Heart right ventricle (tissue), 16 donors: ENCODE measurements at regions of chr7 and their contacts with region 1.

Region 1: GRCh38 chr7:38107486-38107893 is 70.6 kb upstream of the STARD3NL start:
- DNase-seq: peak in 1 of 2 donors; percentile 45
- ATAC-seq: peak in 6 of 8 donors; percentile 69 to 78 (median 74)
- H3K4me3 ChIP-seq: no peak overlapping the region
- H3K27ac ChIP-seq: no peak overlapping the region
- H3K4me1 ChIP-seq: peaks cover 0 to 4% (median 0%) of the 10 kb centered on the region in 9 donors
- H3K27me3 ChIP-seq: peaks cover 0 to 6% (median 0%) of the 10 kb centered on the region in 7 donors
- CTCF ChIP-seq: peak; percentile 68 to 86 (median 81)

Region 2: DNA sequence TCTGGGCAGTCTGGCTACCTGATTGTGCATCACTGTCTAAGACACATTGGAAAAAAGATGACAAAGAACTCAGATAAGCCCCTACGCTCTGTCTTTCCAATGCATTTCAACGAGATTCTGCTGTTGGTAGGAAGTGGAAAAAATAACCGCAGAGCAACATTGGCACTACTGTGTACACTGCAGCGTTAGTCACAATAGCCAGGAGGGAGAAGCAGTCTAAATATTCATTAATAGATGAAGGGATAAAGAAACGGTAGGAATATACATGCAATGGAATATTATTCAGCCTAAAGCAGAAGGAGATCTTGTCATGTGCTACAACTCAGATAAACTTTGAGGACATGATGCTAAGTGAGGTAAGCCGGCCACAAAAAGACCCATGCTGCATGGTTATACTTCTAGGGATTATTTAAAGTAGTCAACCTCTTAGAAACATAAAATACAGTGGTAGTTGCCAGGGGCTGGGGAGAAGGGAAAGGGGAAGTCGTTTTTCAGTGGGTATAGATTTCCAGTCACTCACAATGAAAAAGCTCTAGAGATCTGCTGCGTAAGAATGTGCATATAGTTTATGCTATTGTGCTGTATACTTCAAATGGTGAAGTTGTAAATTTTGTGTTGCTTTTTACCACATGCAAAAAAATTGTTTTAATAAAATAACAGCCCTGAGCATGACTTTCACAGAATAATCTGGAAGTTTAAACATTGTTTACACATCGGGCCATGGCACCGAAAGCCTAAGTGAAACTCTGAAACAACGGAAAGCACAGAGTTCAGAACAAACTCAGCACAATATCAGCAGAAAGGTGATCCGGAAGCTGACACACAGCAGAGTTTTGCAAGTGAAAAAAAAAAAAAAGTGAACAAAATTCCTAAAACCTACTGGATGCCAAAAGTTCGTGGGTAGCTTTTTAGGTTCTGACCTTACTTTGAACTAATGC is 698.9 kb before region 1 on chr7:
- intact Hi-C with region 1: no loop called
- DNase-seq: no peak
- ATAC-seq: peak in 2 of 8 donors; percentile 17 to 26
- H3K4me3 ChIP-seq: peak overlapping the region in 1 of 10 donors; percentile 22
- H3K27ac ChIP-seq: peak overlapping the region in 4 of 10 donors; percentile 5 to 55 (median 44)
- H3K4me1 ChIP-seq: peaks cover 7 to 76% (median 51%) of the 10 kb centered on the region in 9 donors
- H3K27me3 ChIP-seq: no peaks in the 10 kb centered on the region
- CTCF ChIP-seq: no peak

Region 3: GRCh38 chr7:37901236-37901827 is 206.2 kb before region 1 on chr7:
- intact Hi-C with region 1: loop called in 8 of 10 experiments (anchors 5 to 10 kb)
- DNase-seq: no peak
- ATAC-seq: peak in 5 of 8 donors; percentile 47 to 62 (median 57)
- H3K4me3 ChIP-seq: no peak overlapping the region
- H3K27ac ChIP-seq: peak overlapping the region in 1 of 10 donors; percentile 37
- H3K4me1 ChIP-seq: peaks cover 0 to 17% (median 7%) of the 10 kb centered on the region in 9 donors
- H3K27me3 ChIP-seq: no peaks in the 10 kb centered on the region
- CTCF ChIP-seq: peak; percentile 15 to 69 (median 56)

Region 4: GRCh38 chr7:37942934-37943610 is 164.4 kb before region 1 on chr7:
- intact Hi-C with region 1: no loop called
- DNase-seq: peak; percentile 80 to 83
- ATAC-seq: peak; percentile 93 to 98 (median 95)
- H3K4me3 ChIP-seq: no peak overlapping the region
- H3K27ac ChIP-seq: peak overlapping the region; percentile 25 to 87 (median 66)
- H3K4me1 ChIP-seq: peaks cover 2 to 50% (median 30%) of the 10 kb centered on the region in 9 donors
- H3K27me3 ChIP-seq: no peaks in the 10 kb centered on the region
- CTCF ChIP-seq: no peak

Region 5: GRCh38 chr7:38122501-38122900 is 15.0 kb after region 1 on chr7:
- intact Hi-C with region 1: no loop called
- DNase-seq: no peak
- ATAC-seq: no peak
- H3K4me3 ChIP-seq: no peak overlapping the region
- H3K27ac ChIP-seq: no peak overlapping the region
- H3K4me1 ChIP-seq: no peaks in the 10 kb centered on the region
- H3K27me3 ChIP-seq: peaks cover 0 to 3% (median 0%) of the 10 kb centered on the region in 7 donors
- CTCF ChIP-seq: no peak

Region 6: DNA sequence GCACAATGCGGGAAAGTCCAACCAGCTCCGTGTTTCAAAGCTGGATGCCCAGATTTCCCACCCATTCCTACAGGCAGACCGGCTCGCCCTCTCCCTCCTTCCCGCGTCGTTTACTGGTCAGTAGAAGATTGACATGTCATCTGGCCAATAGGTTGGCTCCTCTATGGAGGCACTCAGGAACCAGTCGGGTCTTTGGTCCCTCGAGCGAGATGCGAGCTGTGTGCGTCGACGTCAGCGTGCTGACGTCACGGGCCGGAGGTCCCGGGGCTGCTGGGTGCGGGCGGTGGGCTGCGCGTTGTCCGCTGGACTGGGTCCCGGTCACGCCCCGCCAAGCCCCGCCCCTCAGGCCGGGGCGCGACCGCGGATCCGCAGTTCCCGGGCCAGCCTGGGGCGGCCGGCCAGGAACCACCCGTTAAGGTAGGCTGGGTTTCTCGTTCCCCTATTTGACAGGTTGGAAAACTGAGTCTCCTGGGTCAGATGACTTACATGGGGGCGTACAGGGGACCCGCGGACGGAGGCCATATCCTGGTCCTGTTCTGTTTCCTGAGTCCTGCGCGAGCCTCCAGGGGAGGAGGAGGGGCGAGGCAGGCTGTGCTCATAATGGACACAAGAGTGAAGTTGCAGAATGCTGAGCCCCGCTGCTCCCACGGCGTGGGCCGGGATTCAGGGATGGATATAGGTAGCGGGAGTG is 70.7 kb after region 1 on chr7 and contains the start of gene STARD3NL:
- intact Hi-C with region 1: loop called in 1 of 10 experiments (anchors 2 kb)
- DNase-seq: peak; percentile 94 to 100
- ATAC-seq: peak; percentile 98 to 99 (median 99)
- H3K4me3 ChIP-seq: peak within 1 kb of the TSS; percentile 64 to 94 (median 81)
- H3K27ac ChIP-seq: peak within 1 kb of the TSS; percentile 66 to 96 (median 90)
- H3K4me1 ChIP-seq: peaks cover 2 to 52% (median 40%) of the 10 kb centered on the region in 9 donors
- H3K27me3 ChIP-seq: no peaks in the 10 kb centered on the region
- CTCF ChIP-seq: peak in 1 of 9 donors; percentile 18
- total RNA-seq, gene STARD3NL: 17.6 to 29.3 (median 24.2) TPM

Region 7: GRCh38 chr7:38318803-38319416 is 211.4 kb after region 1 on chr7:
- intact Hi-C with region 1: loop called in 8 of 10 experiments (anchors 2 to 10 kb)
- DNase-seq: peak in 1 of 2 donors; percentile 20
- ATAC-seq: peak in 7 of 8 donors; percentile 79 to 92 (median 86)
- H3K4me3 ChIP-seq: no peak overlapping the region
- H3K27ac ChIP-seq: peak overlapping the region in 3 of 10 donors; percentile 33 to 63 (median 61)
- H3K4me1 ChIP-seq: peaks cover 0 to 23% (median 0%) of the 10 kb centered on the region in 9 donors
- H3K27me3 ChIP-seq: no peaks in the 10 kb centered on the region
- CTCF ChIP-seq: peak; percentile 12 to 71 (median 61)

Region 8: DNA sequence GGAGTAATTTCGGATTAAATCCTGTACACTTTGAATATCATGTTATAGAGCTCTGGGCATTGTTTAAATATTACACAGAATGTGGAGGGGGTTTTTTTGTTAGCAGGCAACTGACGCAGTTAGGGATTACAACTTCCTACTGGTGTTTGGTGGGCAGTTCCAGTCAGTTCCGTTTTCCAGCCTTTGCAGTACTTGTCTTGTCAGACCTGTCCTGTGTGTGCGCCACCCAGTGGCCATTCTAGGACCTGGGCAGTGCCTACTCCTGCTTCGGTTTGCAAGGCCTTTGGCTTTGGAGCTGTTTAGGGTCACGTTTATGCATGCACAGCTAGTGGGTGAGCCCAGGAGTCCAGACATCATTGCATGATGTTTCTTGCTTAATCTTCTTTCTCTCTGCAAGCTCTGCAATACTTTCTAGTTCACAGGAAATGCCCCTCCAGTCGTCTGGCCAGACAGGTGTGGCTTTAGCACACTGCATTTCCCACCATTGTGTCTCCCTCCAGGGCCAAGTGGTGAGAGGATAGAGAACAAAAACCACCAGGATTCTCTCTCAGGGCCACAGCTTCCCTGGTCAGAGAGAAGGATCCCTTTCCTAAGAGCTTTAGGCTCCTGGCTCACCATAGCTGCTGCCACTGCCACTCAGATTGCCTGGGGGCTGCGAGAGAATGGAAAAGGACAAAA is 262.5 kb after region 1 on chr7:
- intact Hi-C with region 1: loop called in 6 of 10 experiments (anchors 5 to 10 kb)
- DNase-seq: peak; percentile 85 to 87
- ATAC-seq: peak; percentile 89 to 96 (median 94)
- H3K4me3 ChIP-seq: peak overlapping the region in 3 of 10 donors; percentile 10 to 27 (median 22)
- H3K27ac ChIP-seq: peak overlapping the region in 7 of 10 donors; percentile 13 to 66 (median 26)
- H3K4me1 ChIP-seq: peaks cover 0 to 38% (median 7%) of the 10 kb centered on the region in 9 donors
- H3K27me3 ChIP-seq: no peaks in the 10 kb centered on the region
- CTCF ChIP-seq: peak; percentile 48 to 89 (median 81)